ENCODE measurements at regions of chr1 and their contacts with region 1.

Region 1: GRCh38 chr1:89085781-89086180 is 20.8 kb upstream of the GBP1 start:
- DNase-seq: peak; percentile 54
- ATAC-seq: peak; percentile 81
- H3K4me3 Mint-ChIP-seq: no peak overlapping the region
- H3K27ac Mint-ChIP-seq: no peak overlapping the region
- H3K4me1 Mint-ChIP-seq: peaks cover 16% of the 10 kb centered on the region
- H3K27me3 Mint-ChIP-seq: no peaks in the 10 kb centered on the region
- CTCF ChIP-seq: peak; percentile 72

Region 2: GRCh38 chr1:89035080-89035479 is 50.7 kb before region 1 on chr1:
- CTCF ChIA-PET with region 1: no interaction called
- POLR2A ChIA-PET with region 1: no interaction called
- DNase-seq: no peak
- ATAC-seq: no peak
- H3K4me3 Mint-ChIP-seq: no peak overlapping the region
- H3K27ac Mint-ChIP-seq: no peak overlapping the region
- H3K4me1 Mint-ChIP-seq: no peaks in the 10 kb centered on the region
- H3K27me3 Mint-ChIP-seq: peaks cover 3% of the 10 kb centered on the region
- CTCF ChIP-seq: no peak

Region 3: GRCh38 chr1:89100412-89100811 is 14.6 kb after region 1 on chr1:
- CTCF ChIA-PET with region 1: interaction called, 11 read pairs
- POLR2A ChIA-PET with region 1: no interaction called
- DNase-seq: peak; percentile 26
- ATAC-seq: peak; percentile 90
- H3K4me3 Mint-ChIP-seq: no peak overlapping the region
- H3K27ac Mint-ChIP-seq: no peak overlapping the region
- H3K4me1 Mint-ChIP-seq: peaks cover 12% of the 10 kb centered on the region
- H3K27me3 Mint-ChIP-seq: no peaks in the 10 kb centered on the region; the same call in 1 of the 2 replicates
- CTCF ChIP-seq: no peak

Region 4: DNA sequence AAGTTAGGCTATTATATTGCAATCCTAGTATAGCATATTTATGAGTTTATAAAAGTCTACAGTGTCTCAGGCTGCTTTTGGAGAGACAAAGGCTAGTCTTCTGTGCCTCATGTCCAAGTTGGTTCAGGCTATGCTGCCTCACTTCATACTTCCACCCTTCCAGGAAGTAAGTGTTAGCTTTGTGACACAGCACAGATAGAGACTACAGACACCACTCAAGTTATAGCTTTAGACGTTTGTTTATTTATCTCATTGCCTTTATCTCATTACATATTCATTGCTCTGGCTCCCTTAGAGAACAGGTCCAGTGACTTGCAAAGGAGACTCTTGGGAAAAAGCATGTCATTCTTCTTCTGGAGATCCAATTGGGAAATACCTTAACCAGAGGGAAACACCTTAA is 135.6 kb after region 1 on chr1:
- CTCF ChIA-PET with region 1: no interaction called
- POLR2A ChIA-PET with region 1: no interaction called
- DNase-seq: no peak
- ATAC-seq: no peak
- H3K4me3 Mint-ChIP-seq: no peak overlapping the region
- H3K27ac Mint-ChIP-seq: no peak overlapping the region
- H3K4me1 Mint-ChIP-seq: no peaks in the 10 kb centered on the region
- H3K27me3 Mint-ChIP-seq: peaks cover 3% of the 10 kb centered on the region; the same call in 1 of the 2 replicates
- CTCF ChIP-seq: no peak

Region 5: DNA sequence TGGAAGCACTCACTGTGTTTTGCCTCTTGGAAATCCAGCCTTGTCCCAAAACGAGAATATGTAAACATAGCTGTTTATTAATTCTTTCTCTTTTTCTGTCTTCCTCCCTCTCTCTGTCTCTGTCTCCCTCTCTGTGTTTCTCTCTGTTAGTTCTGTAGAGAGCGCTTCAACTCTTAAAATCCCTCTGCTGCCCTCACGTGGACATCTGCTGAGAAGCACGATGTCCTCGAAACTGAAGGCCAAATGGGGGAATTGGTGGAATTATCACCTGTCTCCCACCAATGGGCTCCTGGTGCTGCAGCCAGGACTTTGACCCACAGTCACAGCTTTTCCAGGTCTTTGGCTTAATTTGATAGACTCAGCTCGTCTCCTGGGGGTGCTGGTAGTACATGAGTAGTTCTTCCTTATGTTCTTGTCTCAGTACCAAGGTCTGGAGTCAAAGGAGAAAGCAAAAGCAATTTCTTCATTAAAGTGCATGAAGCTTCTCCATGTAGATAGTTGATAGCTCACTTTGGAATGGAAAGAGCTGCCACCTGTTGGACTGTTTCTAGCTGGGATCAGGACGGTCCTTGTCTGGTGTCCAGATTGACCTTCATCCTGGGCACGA is 272.6 kb after region 1 on chr1:
- CTCF ChIA-PET with region 1: interaction called, 43 read pairs
- POLR2A ChIA-PET with region 1: no interaction called
- DNase-seq: peak; percentile 87
- ATAC-seq: peak; percentile 88
- H3K4me3 Mint-ChIP-seq: no peak overlapping the region
- H3K27ac Mint-ChIP-seq: no peak overlapping the region
- H3K4me1 Mint-ChIP-seq: peaks cover 35% of the 10 kb centered on the region
- H3K27me3 Mint-ChIP-seq: no peaks in the 10 kb centered on the region
- CTCF ChIP-seq: peak; percentile 53

Region 6: GRCh38 chr1:89453123-89453972 is 367.6 kb after region 1 on chr1:
- CTCF ChIA-PET with region 1: interaction called, 11 read pairs
- POLR2A ChIA-PET with region 1: no interaction called
- DNase-seq: no peak
- ATAC-seq: no peak
- H3K4me3 Mint-ChIP-seq: no peak overlapping the region
- H3K27ac Mint-ChIP-seq: no peak overlapping the region
- H3K4me1 Mint-ChIP-seq: peaks cover 11% of the 10 kb centered on the region
- H3K27me3 Mint-ChIP-seq: no peaks in the 10 kb centered on the region
- CTCF ChIP-seq: no peak